ENCODE measurements at regions of chr14 and their contacts with region 1.

Region 1: GRCh38 chr14:23877538-23878180 is 75.9 kb upstream of the DHRS4 start:
- DNase-seq: peak; percentile 52
- H3K4me3 Mint-ChIP-seq: peak overlapping the region; percentile 2
- H3K27ac Mint-ChIP-seq: peak overlapping the region; percentile 90
- H3K4me1 Mint-ChIP-seq: peaks cover 10% of the 10 kb centered on the region
- H3K27me3 Mint-ChIP-seq: peaks cover 3% of the 10 kb centered on the region

Region 2: GRCh38 chr14:23555882-23556699 is 321.6 kb before region 1 on chr14 and contains the start of gene THTPA:
- intact Hi-C with region 1: no loop called
- DNase-seq: peak; percentile 98
- H3K4me3 Mint-ChIP-seq: peak within 1 kb of the TSS; percentile 95
- H3K27ac Mint-ChIP-seq: peak within 1 kb of the TSS; percentile 98
- H3K4me1 Mint-ChIP-seq: peaks cover 30% of the 10 kb centered on the region
- H3K27me3 Mint-ChIP-seq: no peaks in the 10 kb centered on the region
- total RNA-seq, gene THTPA: 14.5 and 16.7 TPM in 2 replicates

Region 3: GRCh38 chr14:23605931-23606585 is 271.6 kb before region 1 on chr14:
- intact Hi-C with region 1: loop called (anchors 1 kb)
- DNase-seq: peak; percentile 58
- H3K4me3 Mint-ChIP-seq: peak overlapping the region; percentile 2
- H3K27ac Mint-ChIP-seq: peak overlapping the region; percentile 82
- H3K4me1 Mint-ChIP-seq: peaks cover 29% of the 10 kb centered on the region
- H3K27me3 Mint-ChIP-seq: no peaks in the 10 kb centered on the region

Region 4: DNA sequence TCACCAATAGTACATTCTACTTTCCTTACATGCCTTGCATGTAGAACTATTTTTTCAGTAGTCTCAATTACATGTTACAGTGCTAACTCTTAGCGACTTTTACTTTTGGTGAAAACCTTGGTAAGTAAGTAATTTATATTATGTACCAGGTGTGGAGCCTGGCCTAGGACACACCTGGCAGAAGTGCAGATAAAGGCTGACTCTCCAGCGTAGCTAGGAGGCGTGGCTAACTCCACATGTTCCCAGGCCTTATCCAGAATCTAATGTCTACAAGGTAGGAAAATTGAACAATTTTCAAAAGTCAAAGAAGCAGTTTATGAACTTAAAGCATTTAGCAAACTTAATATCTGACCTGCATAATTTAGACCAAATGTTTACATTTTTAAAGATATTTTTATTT is 84.1 kb before region 1 on chr14:
- intact Hi-C with region 1: no loop called
- DNase-seq: peak; percentile 19
- H3K4me3 Mint-ChIP-seq: no peak overlapping the region
- H3K27ac Mint-ChIP-seq: no peak overlapping the region
- H3K4me1 Mint-ChIP-seq: no peaks in the 10 kb centered on the region
- H3K27me3 Mint-ChIP-seq: peaks cover 7% of the 10 kb centered on the region

Region 5: DNA sequence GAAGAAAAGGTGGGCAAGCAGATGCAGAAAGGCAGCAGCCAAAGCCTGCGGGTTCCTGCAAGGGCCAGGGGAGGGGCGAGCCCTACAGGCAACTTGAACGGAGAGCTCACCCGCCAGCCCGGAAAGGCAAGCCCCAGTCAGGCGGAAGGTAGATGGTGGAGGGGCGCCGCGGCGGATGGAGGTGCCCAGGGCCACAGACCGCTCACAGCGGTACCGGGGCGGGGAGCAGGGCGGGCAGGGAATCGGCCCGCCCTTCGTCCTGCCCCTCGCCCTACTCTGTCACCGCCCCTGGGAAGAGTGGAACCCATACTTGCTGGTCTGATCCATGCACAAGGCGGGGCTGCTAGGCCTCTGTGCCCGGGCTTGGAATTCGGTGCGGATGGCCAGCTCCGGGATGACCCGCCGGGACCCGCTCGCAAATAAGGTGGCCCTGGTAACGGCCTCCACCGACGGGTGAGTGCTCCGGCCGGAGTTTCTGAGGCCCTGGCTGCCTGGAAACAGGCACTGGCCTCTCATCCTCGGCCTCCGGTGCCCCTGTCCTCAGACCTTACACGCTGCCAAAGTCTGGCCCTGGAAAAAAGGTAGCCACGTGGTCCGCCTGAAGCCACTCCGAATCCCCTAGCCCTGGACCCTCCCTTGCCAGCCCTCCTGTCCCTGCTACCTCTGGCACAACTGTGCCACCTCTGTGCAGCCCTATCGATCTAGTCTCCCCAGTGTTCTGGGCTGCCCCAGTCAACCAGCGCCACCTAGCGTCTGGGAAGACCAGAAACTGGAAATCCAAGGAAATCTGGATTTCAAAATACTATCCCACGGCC is 76.0 kb after region 1 on chr14 and contains the start of gene DHRS4:
- intact Hi-C with region 1: no loop called
- DNase-seq: peak; percentile 93
- H3K4me3 Mint-ChIP-seq: peak within 1 kb of the TSS; percentile 99
- H3K27ac Mint-ChIP-seq: peak within 1 kb of the TSS; percentile 90
- H3K4me1 Mint-ChIP-seq: peaks cover 15% of the 10 kb centered on the region
- H3K27me3 Mint-ChIP-seq: no peaks in the 10 kb centered on the region
- total RNA-seq, gene DHRS4: 17.6 and 18.2 TPM in 2 replicates

Measured in activated CD4-positive, alpha-beta T cell treated with anti-CD3 and anti-CD28 coated beads, Interleukin-2, amount 10 ng/mL, durations not matched to agents 24 days and 14 days (primary cell).